Activated T-helper 2 cell treated with anti-CD3 and anti-CD28 coated beads, Interferon-gamma antibody, Interleukin-2, Interleukin-4, amounts not matched to agents 10 μg/mL and 5 μg/mL and 100 μg/mL, durations not matched to agents 14 hours and 24 hours and 36 hours (primary cell): ENCODE measurements at regions of chr17 and their contacts with region 1.

Region 1: DNA sequence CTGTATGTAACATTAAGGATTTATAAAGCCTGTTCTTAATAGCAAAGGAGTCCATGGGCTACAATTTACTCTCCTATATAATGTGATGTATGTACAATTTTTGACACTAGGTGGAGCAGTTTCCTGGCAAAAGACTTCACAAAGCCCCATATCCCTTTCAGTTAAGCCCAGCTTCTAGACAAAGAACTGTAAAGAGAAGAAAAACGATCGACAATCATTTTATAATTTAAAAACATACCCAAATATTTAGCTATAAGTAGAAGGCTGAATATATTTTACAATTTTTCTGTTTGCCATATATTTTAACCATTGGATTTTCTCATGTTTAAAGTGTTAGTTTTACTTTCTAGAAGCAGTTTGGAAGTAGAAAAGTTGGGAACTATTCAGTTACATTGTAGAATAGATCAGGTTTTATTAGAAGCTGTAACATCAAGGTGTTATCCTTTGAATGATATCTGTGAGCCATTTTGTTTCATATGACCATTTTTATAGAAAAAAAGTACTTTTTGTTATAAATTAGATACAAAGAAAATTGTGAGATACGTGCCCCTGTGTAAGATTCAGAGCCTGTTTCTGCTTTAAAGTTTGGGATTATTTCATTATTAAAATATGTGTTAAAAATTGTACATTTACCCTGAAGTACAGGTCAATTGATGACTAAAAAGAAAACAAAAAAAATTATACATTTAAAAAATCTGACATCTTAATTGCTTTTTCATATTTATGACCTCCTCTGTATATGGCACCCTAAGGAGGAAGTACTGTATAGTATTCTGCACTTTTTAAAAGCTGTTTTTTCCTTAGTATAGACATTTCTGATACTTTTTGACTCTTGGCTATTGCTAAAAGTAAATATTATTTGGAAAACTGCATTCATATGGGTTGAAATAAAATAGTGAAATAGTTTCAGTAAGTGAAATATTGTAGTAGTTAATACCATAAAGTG is 46.3 kb downstream of the VMP1 start:
- DNase-seq: no peak
- H3K4me3 Mint-ChIP-seq: peak overlapping the region; percentile 68
- H3K27ac Mint-ChIP-seq: peak overlapping the region; percentile 85
- H3K4me1 Mint-ChIP-seq: peaks cover 53% of the 10 kb centered on the region
- H3K27me3 Mint-ChIP-seq: no peaks in the 10 kb centered on the region

Region 2: GRCh38 chr17:59707114-59707970 is 46.5 kb before region 1 on chr17 and contains the starts of genes PTRH2 and VMP1:
- intact Hi-C with region 1: loop called (anchors 5 kb)
- DNase-seq: peak; percentile 93
- H3K4me3 Mint-ChIP-seq: peak within 1 kb of the TSS; percentile 95
- H3K27ac Mint-ChIP-seq: peak within 1 kb of the TSS; percentile 85
- H3K4me1 Mint-ChIP-seq: peaks cover 43% of the 10 kb centered on the region
- H3K27me3 Mint-ChIP-seq: no peaks in the 10 kb centered on the region
- total RNA-seq, gene PTRH2: 48.3 and 50.3 TPM in 2 replicates
- total RNA-seq, gene VMP1: 479 and 499 TPM in 2 replicates

Region 3: GRCh38 chr17:59725691-59726090 is 28.1 kb before region 1 on chr17:
- intact Hi-C with region 1: no loop called
- DNase-seq: no peak
- H3K4me3 Mint-ChIP-seq: no peak overlapping the region
- H3K27ac Mint-ChIP-seq: no peak overlapping the region
- H3K4me1 Mint-ChIP-seq: peaks cover 2% of the 10 kb centered on the region
- H3K27me3 Mint-ChIP-seq: no peaks in the 10 kb centered on the region

Region 4: GRCh38 chr17:59846394-59847165 is 92.8 kb after region 1 on chr17:
- intact Hi-C with region 1: loop called (anchors 1 kb)
- DNase-seq: no peak
- H3K4me3 Mint-ChIP-seq: peak overlapping the region; percentile 35
- H3K27ac Mint-ChIP-seq: peak overlapping the region; percentile 69
- H3K4me1 Mint-ChIP-seq: peaks cover 48% of the 10 kb centered on the region
- H3K27me3 Mint-ChIP-seq: no peaks in the 10 kb centered on the region

Region 5: DNA sequence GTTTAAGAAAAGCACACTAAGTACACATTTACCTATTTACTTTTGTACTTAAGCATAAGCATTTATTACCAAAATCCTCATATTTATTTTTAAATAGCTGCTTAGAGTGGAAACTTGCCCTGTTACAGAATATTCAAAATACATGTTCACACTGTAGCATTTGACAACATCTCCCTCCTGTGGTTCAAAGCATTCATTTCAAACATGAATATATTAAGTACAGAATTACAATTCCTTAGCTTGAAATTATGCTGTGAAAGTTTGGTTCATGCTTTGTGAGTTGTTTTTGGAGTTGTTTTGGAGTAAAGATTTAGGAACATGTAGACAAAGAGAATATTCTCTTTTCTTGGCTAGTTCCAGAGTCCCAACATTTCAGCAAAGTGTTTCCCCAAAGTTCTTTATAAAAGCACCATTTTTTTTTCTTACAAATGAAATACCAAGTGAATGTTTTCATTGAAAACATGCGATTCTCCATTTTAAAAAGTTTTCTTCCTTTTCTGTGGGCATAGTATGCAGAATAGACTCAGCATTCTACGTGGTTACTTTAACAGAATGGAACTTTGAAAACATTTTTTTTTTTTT is 105.7 kb after region 1 on chr17:
- intact Hi-C with region 1: loop called (anchors 1 kb)
- DNase-seq: no peak
- H3K4me3 Mint-ChIP-seq: no peak overlapping the region
- H3K27ac Mint-ChIP-seq: no peak overlapping the region
- H3K4me1 Mint-ChIP-seq: peaks cover 9% of the 10 kb centered on the region
- H3K27me3 Mint-ChIP-seq: no peaks in the 10 kb centered on the region

Region 6: GRCh38 chr17:59941131-59941530 is 187.3 kb after region 1 on chr17:
- intact Hi-C with region 1: loop called (anchors 5 kb)
- DNase-seq: no peak
- H3K4me3 Mint-ChIP-seq: no peak overlapping the region
- H3K27ac Mint-ChIP-seq: peak overlapping the region; percentile 86
- H3K4me1 Mint-ChIP-seq: peaks cover 18% of the 10 kb centered on the region
- H3K27me3 Mint-ChIP-seq: no peaks in the 10 kb centered on the region

Region 7: GRCh38 chr17:60036796-60037612 is 283.2 kb after region 1 on chr17:
- intact Hi-C with region 1: loop called (anchors 5 kb)
- DNase-seq: peak; percentile 64
- H3K4me3 Mint-ChIP-seq: no peak overlapping the region
- H3K27ac Mint-ChIP-seq: no peak overlapping the region
- H3K4me1 Mint-ChIP-seq: peaks cover 7% of the 10 kb centered on the region
- H3K27me3 Mint-ChIP-seq: peaks cover 21% of the 10 kb centered on the region